CD4-positive, alpha-beta memory T cell (primary cell): ENCODE measurements at regions of chr1 and their contacts with region 1.

Region 1: DNA sequence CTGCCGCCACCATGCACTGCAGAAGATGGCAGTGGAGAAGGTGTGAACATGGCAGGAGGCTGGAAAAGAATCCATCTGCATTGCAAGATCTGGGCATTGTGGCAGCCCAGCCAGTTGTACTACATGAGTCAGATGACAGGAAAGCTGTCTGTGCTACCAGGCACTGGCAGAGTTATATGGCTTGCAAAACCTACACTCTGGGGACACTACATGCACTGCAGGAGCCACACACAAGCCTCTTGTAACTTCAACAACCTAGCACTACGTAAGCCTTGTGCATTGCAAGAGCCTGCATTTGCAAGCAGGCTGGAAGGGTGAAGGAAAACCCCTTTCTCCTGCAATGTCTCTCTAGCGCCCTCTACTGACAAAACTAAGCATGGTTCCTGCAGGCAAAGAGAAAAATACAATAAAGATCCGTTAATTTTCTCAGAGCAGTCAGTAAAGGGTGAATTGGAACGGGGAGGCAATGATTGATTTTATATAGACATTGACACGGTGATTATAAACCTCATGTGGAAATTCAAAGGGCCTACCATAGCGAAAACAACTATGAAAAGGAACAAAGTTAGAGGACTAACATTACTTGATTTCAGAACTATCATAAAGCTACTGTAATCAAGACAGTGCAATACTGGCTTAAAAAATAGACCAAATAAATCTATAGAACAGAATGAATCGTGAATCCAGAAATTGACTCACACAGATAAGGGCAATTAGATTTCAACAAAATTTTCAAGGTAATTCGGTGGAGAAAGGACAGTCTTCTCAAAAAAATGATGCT is 26.2 kb upstream of the DYNLT5 start:
- DNase-seq: peak; percentile 54 to 66 (median 59)
- H3K4me3 ChIP-seq: no peak overlapping the region
- H3K4me3 Mint-ChIP-seq: no peak overlapping the region
- H3K27ac ChIP-seq: no peak overlapping the region
- H3K27ac Mint-ChIP-seq: no peak overlapping the region
- H3K4me1 ChIP-seq: no peaks in the 10 kb centered on the region
- H3K4me1 Mint-ChIP-seq: peaks cover 9 to 18% (median 15%) of the 10 kb centered on the region in 4 donors
- H3K27me3 ChIP-seq: no peaks in the 10 kb centered on the region
- H3K27me3 Mint-ChIP-seq: peaks cover 7 to 14% of the 10 kb centered on the region in 2 donors

Region 2: GRCh38 chr1:65958561-65959350 is 767.3 kb before region 1 on chr1:
- CTCF ChIA-PET with region 1: interaction called, 11 read pairs
- POLR2A ChIA-PET with region 1: no interaction called
- intact Hi-C with region 1: loop called (anchors 1 kb)
- DNase-seq: peak in 4 of 5 donors; percentile 55 to 73 (median 63)
- H3K4me3 ChIP-seq: no peak overlapping the region
- H3K4me3 Mint-ChIP-seq: no peak overlapping the region
- H3K27ac ChIP-seq: no peak overlapping the region
- H3K27ac Mint-ChIP-seq: no peak overlapping the region
- H3K4me1 ChIP-seq: no peaks in the 10 kb centered on the region
- H3K4me1 Mint-ChIP-seq: no peaks in the 10 kb centered on the region
- H3K27me3 ChIP-seq: no peaks in the 10 kb centered on the region
- H3K27me3 Mint-ChIP-seq: peaks cover 2 to 5% of the 10 kb centered on the region in 2 donors

Region 3: GRCh38 chr1:66253330-66253921 is 472.6 kb before region 1 on chr1:
- CTCF ChIA-PET with region 1: no interaction called
- POLR2A ChIA-PET with region 1: no interaction called
- intact Hi-C with region 1: loop called (anchors 2 kb)
- DNase-seq: peak in 4 of 5 donors; percentile 45 to 55 (median 50)
- H3K4me3 ChIP-seq: no peak overlapping the region
- H3K4me3 Mint-ChIP-seq: no peak overlapping the region
- H3K27ac ChIP-seq: no peak overlapping the region
- H3K27ac Mint-ChIP-seq: peak overlapping the region in 1 of 7 donors; percentile 57
- H3K4me1 ChIP-seq: peaks cover 26% of the 10 kb centered on the region
- H3K4me1 Mint-ChIP-seq: peaks cover 5 to 24% (median 16%) of the 10 kb centered on the region in 4 donors
- H3K27me3 ChIP-seq: no peaks in the 10 kb centered on the region
- H3K27me3 Mint-ChIP-seq: peaks cover 0 to 2% of the 10 kb centered on the region in 2 donors

Region 4: GRCh38 chr1:66607458-66607857 is 118.6 kb before region 1 on chr1:
- CTCF ChIA-PET with region 1: no interaction called
- POLR2A ChIA-PET with region 1: no interaction called
- intact Hi-C with region 1: loop called (anchors 1 kb)
- DNase-seq: no peak
- H3K4me3 ChIP-seq: no peak overlapping the region
- H3K4me3 Mint-ChIP-seq: no peak overlapping the region
- H3K27ac ChIP-seq: no peak overlapping the region
- H3K27ac Mint-ChIP-seq: no peak overlapping the region
- H3K4me1 ChIP-seq: no peaks in the 10 kb centered on the region
- H3K4me1 Mint-ChIP-seq: no peaks in the 10 kb centered on the region
- H3K27me3 ChIP-seq: no peaks in the 10 kb centered on the region
- H3K27me3 Mint-ChIP-seq: peaks cover 8 to 12% of the 10 kb centered on the region in 2 donors

Region 5: DNA sequence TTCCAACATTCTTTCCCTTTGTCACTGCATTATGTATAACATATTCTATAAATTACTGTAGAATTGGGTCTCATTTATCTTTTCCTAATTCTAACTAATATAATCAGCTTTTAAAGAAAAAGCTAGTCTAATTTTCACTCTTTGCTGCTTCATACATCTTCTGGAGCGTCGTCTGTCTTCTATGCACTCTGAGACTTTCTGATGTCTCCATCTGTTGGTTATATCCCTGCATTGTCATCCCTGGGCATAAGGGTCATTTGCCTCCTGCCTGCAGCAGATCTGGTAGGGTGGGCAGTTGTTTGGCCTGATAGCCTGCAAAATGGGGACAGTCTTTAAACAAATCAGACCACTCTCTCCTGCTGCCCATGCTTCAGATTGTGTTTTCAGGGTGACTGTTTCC is 14.7 kb before region 1 on chr1:
- CTCF ChIA-PET with region 1: interaction called, 15 read pairs
- POLR2A ChIA-PET with region 1: no interaction called
- intact Hi-C with region 1: no loop called
- DNase-seq: no peak
- H3K4me3 ChIP-seq: no peak overlapping the region
- H3K4me3 Mint-ChIP-seq: no peak overlapping the region
- H3K27ac ChIP-seq: no peak overlapping the region
- H3K27ac Mint-ChIP-seq: no peak overlapping the region
- H3K4me1 ChIP-seq: no peaks in the 10 kb centered on the region
- H3K4me1 Mint-ChIP-seq: no peaks in the 10 kb centered on the region
- H3K27me3 ChIP-seq: no peaks in the 10 kb centered on the region
- H3K27me3 Mint-ChIP-seq: peaks cover 10 to 25% of the 10 kb centered on the region in 2 donors

Region 6: GRCh38 chr1:66739401-66740157 is 13.5 kb after region 1 on chr1:
- CTCF ChIA-PET with region 1: interaction called, 19 read pairs
- POLR2A ChIA-PET with region 1: interaction called, 3 read pairs
- intact Hi-C with region 1: no loop called
- DNase-seq: no peak
- H3K4me3 ChIP-seq: no peak overlapping the region
- H3K4me3 Mint-ChIP-seq: no peak overlapping the region
- H3K27ac ChIP-seq: no peak overlapping the region
- H3K27ac Mint-ChIP-seq: no peak overlapping the region
- H3K4me1 ChIP-seq: no peaks in the 10 kb centered on the region
- H3K4me1 Mint-ChIP-seq: peaks cover 0 to 9% (median 3%) of the 10 kb centered on the region in 4 donors
- H3K27me3 ChIP-seq: no peaks in the 10 kb centered on the region
- H3K27me3 Mint-ChIP-seq: no peaks in the 10 kb centered on the region